ENCODE measurements at regions of chr15 and their contacts with region 1.

Region 1: DNA sequence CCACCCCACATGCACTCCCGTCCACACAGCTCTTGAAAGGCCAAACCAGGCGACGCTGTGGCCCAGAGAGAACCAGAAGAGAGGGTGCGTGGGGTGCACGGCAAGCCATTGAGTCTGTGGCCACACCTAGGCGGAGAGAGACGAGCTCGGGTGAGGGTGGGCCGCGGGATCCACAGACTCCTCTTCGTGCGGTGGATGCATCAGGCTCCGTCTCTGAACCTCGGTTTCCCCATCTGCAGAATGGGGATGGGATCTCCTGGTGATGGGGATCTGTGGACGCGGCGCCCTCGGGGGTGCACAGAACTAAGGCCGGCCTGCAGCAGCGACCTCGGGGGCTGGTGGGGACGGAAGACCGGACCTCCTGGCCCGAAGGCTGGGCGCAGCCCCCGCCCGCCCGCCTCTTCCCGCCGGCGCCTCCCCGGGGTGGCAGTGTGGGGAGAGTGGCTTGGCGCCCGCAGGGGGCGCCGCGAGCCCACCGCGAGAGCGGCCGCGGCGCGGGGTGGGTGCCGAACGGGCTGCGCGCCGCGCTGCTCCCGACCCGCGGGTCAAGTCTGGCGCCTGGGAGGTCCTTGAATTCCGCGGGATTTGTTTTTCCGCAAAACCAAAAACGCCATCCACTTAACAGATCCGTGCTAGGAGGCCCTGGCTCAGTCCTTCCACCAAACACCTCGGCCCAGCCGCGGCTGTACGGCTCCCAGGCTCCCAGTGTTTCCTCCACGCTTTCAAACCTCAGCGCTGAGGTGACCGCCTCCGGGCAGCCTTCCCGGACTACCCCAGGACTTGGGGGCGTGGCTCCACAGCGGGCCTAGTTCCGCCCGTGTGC is 13.2 kb upstream of the ADPGK start:
- DNase-seq: peak; percentile 44
- ATAC-seq: peak; percentile 94
- H3K4me3 Mint-ChIP-seq: peak overlapping the region; percentile 77
- H3K27ac Mint-ChIP-seq: no peak overlapping the region
- H3K4me1 Mint-ChIP-seq: peaks cover 18% of the 10 kb centered on the region
- H3K27me3 Mint-ChIP-seq: peaks cover 42% of the 10 kb centered on the region

Region 2: DNA sequence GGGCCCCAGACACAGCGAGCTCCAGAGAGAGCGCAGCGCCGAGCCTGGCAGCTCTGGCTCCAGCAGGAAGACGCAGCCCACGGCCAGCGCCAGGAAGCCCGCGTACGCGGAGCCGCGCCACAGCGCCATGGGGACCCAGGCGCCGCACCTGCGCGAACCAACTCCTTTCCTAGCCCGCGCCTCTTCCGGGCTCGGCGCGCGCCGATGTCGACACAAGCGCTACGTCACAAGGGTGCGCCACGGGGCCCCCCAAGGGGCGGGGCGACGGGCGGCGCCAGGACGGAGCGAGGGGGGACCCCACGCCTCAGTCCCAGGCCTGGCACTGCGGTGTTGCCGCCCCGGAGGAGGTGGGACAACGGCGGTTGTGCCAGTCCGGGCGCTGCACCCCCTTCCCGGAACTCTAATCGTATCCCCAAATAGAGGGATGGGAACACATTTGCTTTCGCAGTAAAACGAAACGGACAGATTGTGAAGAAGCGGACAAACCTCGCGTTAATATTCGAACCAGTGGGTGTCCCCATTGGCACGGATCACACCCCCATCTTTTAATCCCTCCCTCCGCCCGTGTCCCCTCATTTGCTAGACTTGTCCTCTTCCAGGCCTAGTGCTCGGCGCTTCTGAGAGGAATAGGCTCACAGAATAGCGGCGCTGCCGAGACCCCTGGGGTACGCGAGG is 13.0 kb before region 1 on chr15 and contains the start of gene ADPGK:
- CTCF ChIA-PET with region 1: interaction called, 12 read pairs
- POLR2A ChIA-PET with region 1: interaction called, 6 read pairs
- DNase-seq: peak; percentile 93
- ATAC-seq: peak; percentile 85
- H3K4me3 Mint-ChIP-seq: peak within 1 kb of the TSS; percentile 86
- H3K27ac Mint-ChIP-seq: peak within 1 kb of the TSS; percentile 95
- H3K4me1 Mint-ChIP-seq: peaks cover 56% of the 10 kb centered on the region
- H3K27me3 Mint-ChIP-seq: no peaks in the 10 kb centered on the region
- total RNA-seq, gene ADPGK: 69.3 to 76.2 TPM